Activated naive CD4-positive, alpha-beta T cell treated with anti-CD3 and anti-CD28 coated beads for 36 hours (primary cell): ENCODE measurements at regions of chr18 and their contacts with region 1.

Region 1: GRCh38 chr18:22813648-22814328 is 119.3 kb upstream of the RBBP8 start:
- DNase-seq: peak; percentile 35
- H3K4me3 Mint-ChIP-seq: no peak overlapping the region
- H3K27ac Mint-ChIP-seq: no peak overlapping the region
- H3K4me1 Mint-ChIP-seq: peaks cover 4% of the 10 kb centered on the region
- H3K27me3 Mint-ChIP-seq: peaks cover 17% of the 10 kb centered on the region

Region 2: GRCh38 chr18:22846088-22846683 is 32.4 kb after region 1 on chr18:
- CTCF ChIA-PET with region 1: no interaction called
- intact Hi-C with region 1: loop called (anchors 5 kb)
- DNase-seq: no peak
- H3K4me3 Mint-ChIP-seq: no peak overlapping the region
- H3K27ac Mint-ChIP-seq: no peak overlapping the region
- H3K4me1 Mint-ChIP-seq: peaks cover 3% of the 10 kb centered on the region
- H3K27me3 Mint-ChIP-seq: peaks cover 7% of the 10 kb centered on the region

Region 3: DNA sequence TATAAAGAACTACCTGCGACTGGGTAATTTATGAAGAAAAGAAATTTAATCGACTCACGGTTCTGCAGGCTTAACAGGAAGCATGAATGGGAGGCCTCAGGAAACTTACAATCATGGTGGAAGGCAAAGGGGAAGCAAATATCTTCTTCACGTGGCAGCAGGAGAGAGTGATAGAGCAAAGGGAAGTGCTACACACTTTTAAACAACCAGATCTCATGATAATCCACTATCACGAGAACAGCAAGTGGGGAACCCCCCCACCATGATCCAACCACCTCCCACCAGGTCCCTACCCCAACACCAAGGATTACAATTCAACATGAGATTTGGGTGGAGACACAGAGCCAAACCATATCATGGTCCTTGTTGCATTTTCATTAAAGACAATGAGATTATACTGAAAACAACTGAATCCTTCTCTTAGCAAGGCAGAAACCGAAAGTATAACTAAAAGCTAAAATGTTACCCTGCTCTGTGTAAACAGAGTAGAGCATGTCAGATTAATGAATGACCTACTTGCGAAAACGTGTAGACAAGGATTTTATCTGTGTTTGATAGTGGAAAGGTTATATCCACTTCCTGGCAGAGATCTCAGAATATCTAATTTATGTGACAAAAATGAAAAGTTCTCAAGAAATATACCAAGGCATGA is 59.2 kb after region 1 on chr18:
- CTCF ChIA-PET with region 1: interaction called, 3 read pairs
- intact Hi-C with region 1: loop called (anchors 10 kb)
- DNase-seq: no peak
- H3K4me3 Mint-ChIP-seq: no peak overlapping the region
- H3K27ac Mint-ChIP-seq: peak overlapping the region; percentile 32
- H3K4me1 Mint-ChIP-seq: peaks cover 5% of the 10 kb centered on the region
- H3K27me3 Mint-ChIP-seq: peaks cover 8% of the 10 kb centered on the region

Region 4: GRCh38 chr18:22983175-22983574 is 169.4 kb after region 1 on chr18:
- CTCF ChIA-PET with region 1: interaction called, 7 read pairs
- intact Hi-C with region 1: loop called (anchors 1 kb)
- DNase-seq: no peak
- H3K4me3 Mint-ChIP-seq: no peak overlapping the region
- H3K27ac Mint-ChIP-seq: no peak overlapping the region
- H3K4me1 Mint-ChIP-seq: peaks cover 10% of the 10 kb centered on the region
- H3K27me3 Mint-ChIP-seq: no peaks in the 10 kb centered on the region

Region 5: GRCh38 chr18:23356915-23357601 is 543.3 kb after region 1 on chr18:
- CTCF ChIA-PET with region 1: no interaction called
- intact Hi-C with region 1: loop called (anchors 5 kb)
- DNase-seq: no peak
- H3K4me3 Mint-ChIP-seq: no peak overlapping the region
- H3K27ac Mint-ChIP-seq: no peak overlapping the region
- H3K4me1 Mint-ChIP-seq: peaks cover 14% of the 10 kb centered on the region
- H3K27me3 Mint-ChIP-seq: no peaks in the 10 kb centered on the region

Region 6: GRCh38 chr18:23412351-23412964 is 598.7 kb after region 1 on chr18:
- CTCF ChIA-PET with region 1: no interaction called
- intact Hi-C with region 1: loop called (anchors 5 kb)
- DNase-seq: no peak
- H3K4me3 Mint-ChIP-seq: no peak overlapping the region
- H3K27ac Mint-ChIP-seq: no peak overlapping the region
- H3K4me1 Mint-ChIP-seq: no peaks in the 10 kb centered on the region
- H3K27me3 Mint-ChIP-seq: no peaks in the 10 kb centered on the region